Left ventricle myocardium inferior (tissue), 1 donor: ENCODE measurements at regions of chr5 and their contacts with region 1.

Region 1: GRCh38 chr5:64811050-64811640 is 42.4 kb downstream of the CWC27 start:
- DNase-seq: no peak
- H3K4me3 ChIP-seq: no peak overlapping the region
- H3K27ac ChIP-seq: no peak overlapping the region
- H3K4me1 ChIP-seq: peaks cover 28% of the 10 kb centered on the region
- H3K27me3 ChIP-seq: no peaks in the 10 kb centered on the region
- CTCF ChIP-seq: peak; percentile 81

Region 2: GRCh38 chr5:65035211-65036206 is 224.4 kb after region 1 on chr5:
- intact Hi-C with region 1: loop called (anchors 10 kb)
- DNase-seq: peak; percentile 90
- H3K4me3 ChIP-seq: peak overlapping the region; percentile 86
- H3K27ac ChIP-seq: peak overlapping the region; percentile 98
- H3K4me1 ChIP-seq: peaks cover 52% of the 10 kb centered on the region
- H3K27me3 ChIP-seq: no peaks in the 10 kb centered on the region
- CTCF ChIP-seq: peak; percentile 40